Activated CD4-positive, alpha-beta T cell treated with anti-CD3 and anti-CD28 coated beads for 36 hours (primary cell): ENCODE measurements at regions of chr19 and their contacts with region 1.

Region 1: DNA sequence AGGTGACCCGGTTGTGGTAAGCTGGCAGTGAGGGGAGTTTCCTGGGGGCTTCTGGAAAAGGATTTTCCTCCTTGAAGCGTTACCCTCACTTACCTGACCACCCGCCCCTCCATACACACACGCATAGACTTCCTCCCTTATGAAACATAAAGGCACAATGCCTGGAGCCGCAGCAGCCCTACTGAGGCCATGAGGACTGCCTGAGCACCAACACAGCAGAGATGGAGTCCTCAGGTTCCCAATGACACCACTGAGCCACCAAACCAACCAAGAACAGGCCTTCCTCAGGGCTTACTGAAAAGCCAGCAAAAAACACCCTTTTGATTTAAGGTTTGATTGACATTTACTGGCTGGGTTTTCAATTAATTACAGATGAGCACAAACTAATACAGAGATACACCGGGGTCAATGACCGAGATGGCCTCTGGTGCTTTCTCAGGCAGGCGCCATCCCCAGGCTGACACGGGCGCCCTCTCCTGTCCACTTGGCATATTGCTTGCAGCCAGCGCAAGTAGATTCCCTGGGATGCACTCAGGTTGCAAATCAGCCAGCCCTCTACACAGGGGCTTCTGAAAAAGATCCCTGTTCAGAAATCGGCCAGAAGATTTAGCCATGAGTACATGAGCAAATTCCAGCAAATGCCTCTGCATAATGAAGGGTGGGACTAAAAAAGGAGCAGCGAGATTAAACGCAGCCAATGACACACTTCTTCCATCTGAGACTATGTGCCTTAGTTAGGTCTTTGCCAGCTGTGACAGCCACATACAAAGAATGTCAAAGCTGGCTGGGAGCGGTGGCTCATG is 14.8 kb downstream of the OPA3 start:
- DNase-seq: peak; percentile 84
- ATAC-seq: peak; percentile 87
- H3K4me3 Mint-ChIP-seq: no peak overlapping the region
- H3K27ac Mint-ChIP-seq: peak overlapping the region; percentile 49
- H3K4me1 Mint-ChIP-seq: peaks cover 4% of the 10 kb centered on the region
- H3K27me3 Mint-ChIP-seq: no peaks in the 10 kb centered on the region

Region 2: DNA sequence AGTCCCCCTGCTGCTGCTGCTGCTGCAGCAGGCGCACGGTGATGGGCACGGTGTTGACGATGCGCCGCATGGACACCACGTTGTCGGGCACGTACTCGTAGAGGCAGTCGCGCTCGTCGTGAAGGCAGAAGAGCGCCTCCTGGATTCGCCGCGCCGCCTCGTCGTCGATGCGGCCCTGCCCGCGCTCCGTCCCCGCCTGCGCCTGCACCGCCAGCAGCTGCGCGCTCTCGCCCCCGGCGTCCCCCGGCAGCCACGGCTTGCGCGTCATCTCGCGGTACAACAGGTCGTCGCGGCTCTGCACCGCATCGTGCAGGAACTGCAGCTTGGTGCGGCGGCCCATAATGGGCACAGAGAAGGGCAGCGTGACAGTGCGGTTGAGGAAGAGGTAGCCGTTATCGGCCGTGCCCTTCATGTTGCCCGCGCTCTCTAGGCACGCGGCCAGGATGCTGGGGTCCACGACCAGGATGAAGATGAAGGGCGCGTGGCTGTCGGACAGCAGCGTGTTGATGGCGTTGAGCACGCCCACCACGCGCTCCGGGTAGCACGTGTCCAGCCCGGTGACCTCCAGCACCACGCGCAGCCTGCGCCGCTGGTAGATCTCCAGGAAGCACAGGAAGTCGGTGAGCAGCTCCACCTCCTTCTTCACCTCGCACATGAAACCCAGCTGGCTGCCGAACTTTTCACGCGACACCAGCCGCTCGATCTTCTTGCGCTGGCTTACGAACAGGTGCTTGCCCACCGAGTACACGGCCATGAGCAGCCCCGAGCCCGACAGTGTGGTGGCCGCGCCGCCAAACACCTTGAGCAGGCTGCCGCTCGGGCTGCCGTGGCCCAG is 417.1 kb before region 1 on chr19:
- CTCF ChIA-PET with region 1: no interaction called
- POLR2A ChIA-PET with region 1: no interaction called
- intact Hi-C with region 1: no loop called
- DNase-seq: peak; percentile 69
- ATAC-seq: peak; percentile 57
- H3K4me3 Mint-ChIP-seq: peak overlapping the region; percentile 42
- H3K27ac Mint-ChIP-seq: peak overlapping the region; percentile 47
- H3K4me1 Mint-ChIP-seq: peaks cover 18% of the 10 kb centered on the region
- H3K27me3 Mint-ChIP-seq: peaks cover 26% of the 10 kb centered on the region

Region 3: GRCh38 chr19:45523642-45524256 is 46.1 kb before region 1 on chr19:
- CTCF ChIA-PET with region 1: interaction called, 3 read pairs
- POLR2A ChIA-PET with region 1: no interaction called
- intact Hi-C with region 1: loop called in 1 of 2 experiments (anchors 1 kb)
- DNase-seq: peak; percentile 84
- ATAC-seq: peak; percentile 99
- H3K4me3 Mint-ChIP-seq: no peak overlapping the region
- H3K27ac Mint-ChIP-seq: peak overlapping the region; percentile 19
- H3K4me1 Mint-ChIP-seq: peaks cover 14% of the 10 kb centered on the region
- H3K27me3 Mint-ChIP-seq: peaks cover 2% of the 10 kb centered on the region

Region 4: GRCh38 chr19:45547976-45548609 is 21.7 kb before region 1 on chr19:
- CTCF ChIA-PET with region 1: no interaction called
- POLR2A ChIA-PET with region 1: no interaction called
- intact Hi-C with region 1: no loop called
- DNase-seq: no peak
- ATAC-seq: no peak
- H3K4me3 Mint-ChIP-seq: no peak overlapping the region
- H3K27ac Mint-ChIP-seq: no peak overlapping the region
- H3K4me1 Mint-ChIP-seq: peaks cover 6% of the 10 kb centered on the region
- H3K27me3 Mint-ChIP-seq: no peaks in the 10 kb centered on the region

Region 5: DNA sequence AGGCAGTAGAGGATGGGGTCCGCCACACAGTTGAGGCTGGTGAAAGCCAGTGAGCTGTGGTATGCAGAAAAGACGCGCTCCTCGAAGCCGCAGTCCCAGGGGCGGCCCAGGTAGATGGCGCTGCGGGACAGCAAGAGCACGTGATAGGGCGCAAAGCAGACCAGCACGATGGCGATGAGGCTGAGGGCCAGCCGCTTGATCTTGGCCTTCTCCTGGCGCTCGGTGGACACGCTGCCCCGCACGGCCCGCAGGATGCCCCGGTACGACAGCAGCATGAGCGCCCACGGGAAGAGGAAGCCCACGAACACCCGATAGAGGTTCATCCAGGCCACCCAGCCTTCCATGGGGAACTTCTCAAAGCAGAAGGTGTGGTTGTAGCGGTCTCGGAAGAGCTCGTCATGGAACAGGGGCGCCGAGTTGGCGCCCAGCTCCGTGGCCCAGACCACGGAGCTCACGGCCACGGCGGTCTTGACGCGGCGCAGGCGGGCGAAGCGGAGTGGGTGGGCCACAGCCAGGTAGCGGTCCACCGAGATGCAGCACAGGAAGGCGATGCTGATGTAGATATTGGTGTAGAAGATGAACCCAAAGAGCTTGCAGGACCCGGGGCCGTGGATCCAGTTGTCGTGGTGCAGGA is 21.3 kb after region 1 on chr19:
- CTCF ChIA-PET with region 1: no interaction called
- POLR2A ChIA-PET with region 1: no interaction called
- intact Hi-C with region 1: loop called in 1 of 2 experiments (anchors 2 kb)
- DNase-seq: peak; percentile 79
- ATAC-seq: peak; percentile 89
- H3K4me3 Mint-ChIP-seq: no peak overlapping the region
- H3K27ac Mint-ChIP-seq: no peak overlapping the region
- H3K4me1 Mint-ChIP-seq: peaks cover 11% of the 10 kb centered on the region
- H3K27me3 Mint-ChIP-seq: peaks cover 30% of the 10 kb centered on the region